ENCODE measurements at regions of chr5 and their contacts with region 1.

Region 1: DNA sequence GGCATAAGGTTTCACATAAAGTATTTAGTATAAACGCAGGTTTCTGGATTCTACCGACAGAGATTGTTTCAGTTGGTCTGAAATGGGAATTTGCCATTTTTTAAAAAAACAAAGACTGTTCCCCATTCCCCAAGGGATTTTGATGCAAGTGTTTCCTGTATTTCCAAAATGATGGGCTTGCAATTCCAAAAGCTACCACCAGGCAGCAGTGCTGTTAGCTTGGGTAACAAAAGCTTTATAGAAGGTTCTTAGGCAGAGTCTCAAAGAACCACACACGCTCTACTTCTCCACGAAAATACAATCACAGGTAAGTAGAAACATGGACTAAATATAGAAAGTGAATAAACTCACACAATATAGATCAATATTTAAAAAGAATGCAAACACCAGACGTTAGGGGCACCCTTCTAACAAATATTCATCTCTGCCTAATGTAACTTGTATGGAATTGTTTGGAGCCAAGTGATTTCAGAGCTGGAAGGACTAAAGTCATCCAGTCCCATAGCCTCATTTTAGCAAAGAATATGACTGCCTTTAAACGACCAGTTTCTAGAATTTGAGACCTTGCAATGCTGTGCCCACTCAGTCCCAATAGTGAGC is 154.3 kb downstream of the SPOCK1 start:
- DNase-seq: no peak
- H3K4me3 ChIP-seq: no peak overlapping the region
- CTCF ChIP-seq: peak; percentile 68

Region 2: GRCh38 chr5:137328463-137328862 is 16.4 kb before region 1 on chr5:
- CTCF ChIA-PET with region 1: interaction called, 43 read pairs
- POLR2A ChIA-PET with region 1: no interaction called
- DNase-seq: no peak
- H3K4me3 ChIP-seq: no peak overlapping the region
- CTCF ChIP-seq: no peak

Region 3: GRCh38 chr5:137361280-137361679 is 16.5 kb after region 1 on chr5:
- CTCF ChIA-PET with region 1: interaction called, 17 read pairs
- POLR2A ChIA-PET with region 1: no interaction called
- DNase-seq: peak; percentile 64
- H3K4me3 ChIP-seq: no peak overlapping the region
- CTCF ChIP-seq: no peak

Region 4: GRCh38 chr5:137370096-137371071 is 25.6 kb after region 1 on chr5:
- CTCF ChIA-PET with region 1: interaction called, 11 read pairs
- POLR2A ChIA-PET with region 1: no interaction called
- DNase-seq: peak; percentile 37
- H3K4me3 ChIP-seq: no peak overlapping the region
- CTCF ChIP-seq: no peak

Region 5: DNA sequence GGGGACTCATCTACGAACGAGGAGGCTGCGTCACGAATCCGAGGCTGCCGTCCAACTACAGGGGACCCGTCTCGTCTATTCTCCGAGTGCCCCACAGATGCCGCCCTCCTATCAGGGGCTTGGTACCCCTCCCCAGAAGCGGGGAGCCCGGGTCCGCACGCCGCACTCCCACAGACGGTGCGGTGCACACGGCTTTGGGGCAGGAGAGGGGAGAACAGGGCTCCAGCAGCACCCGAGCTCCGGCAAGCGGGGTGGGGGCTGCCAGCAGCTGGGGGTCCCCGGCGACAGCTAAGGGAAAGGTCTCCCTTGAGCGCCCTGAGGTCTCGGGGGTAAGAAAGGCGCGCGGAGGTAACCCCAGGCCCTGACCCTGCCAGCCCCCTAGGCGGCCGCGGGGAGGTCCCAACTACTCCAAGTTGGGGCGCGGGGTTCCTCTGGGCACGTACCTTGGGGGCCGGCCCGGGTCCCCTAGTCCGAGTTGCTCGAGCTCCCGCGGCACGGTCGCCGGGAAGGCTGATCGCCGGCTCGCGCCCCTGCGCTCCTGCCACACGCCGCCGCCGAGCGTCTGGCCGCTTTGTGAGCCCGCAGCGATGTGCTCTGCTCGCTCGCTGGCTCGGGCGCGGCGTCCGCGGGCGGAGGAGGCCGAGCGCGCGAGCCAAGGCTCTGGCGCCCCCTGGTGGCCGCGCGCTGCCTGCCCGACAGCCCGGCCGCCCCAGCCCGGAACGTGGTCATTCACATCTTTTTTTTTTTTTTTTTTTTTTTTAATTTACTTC is 154.1 kb after region 1 on chr5 and contains the start of gene SPOCK1:
- CTCF ChIA-PET with region 1: interaction called, 192 read pairs
- POLR2A ChIA-PET with region 1: no interaction called
- DNase-seq: no peak
- H3K4me3 ChIP-seq: peak within 1 kb of the TSS; percentile 81
- CTCF ChIP-seq: peak; percentile 58